ENCODE measurements at regions of chr4 and their contacts with region 1.

Region 1: GRCh38 chr4:124105212-124105611 is 607.3 kb downstream of the ANKRD50 start:
- DNase-seq: no peak
- ATAC-seq: peak in 1 of 2 donors; percentile 50
- H3K4me3 ChIP-seq: no peak overlapping the region
- H3K27ac ChIP-seq: no peak overlapping the region
- H3K4me1 ChIP-seq: no peaks in the 10 kb centered on the region
- H3K27me3 ChIP-seq: no peaks in the 10 kb centered on the region

Region 2: DNA sequence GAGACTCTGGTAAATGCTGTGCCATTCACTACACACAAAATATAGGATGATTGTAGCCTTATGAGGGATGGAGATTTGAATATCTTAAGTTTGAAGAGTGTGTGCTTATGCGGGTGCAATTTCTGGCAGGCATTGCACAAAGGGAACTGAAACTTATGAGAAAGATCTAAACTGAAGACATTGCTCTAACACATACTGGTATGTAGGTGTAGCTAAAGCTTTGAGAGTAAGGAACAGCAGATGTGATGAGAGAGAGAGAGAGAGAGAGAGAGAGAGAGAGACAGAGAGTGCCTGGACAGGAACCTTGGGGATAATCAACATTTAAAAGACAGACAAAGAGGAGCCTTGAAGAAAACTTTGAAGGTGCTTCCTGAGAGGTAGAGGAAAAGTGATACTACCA is 329.0 kb before region 1 on chr4:
- intact Hi-C with region 1: loop called in 3 of 4 experiments (anchors 5 to 10 kb)
- DNase-seq: no peak
- ATAC-seq: no peak
- H3K4me3 ChIP-seq: no peak overlapping the region
- H3K27ac ChIP-seq: no peak overlapping the region
- H3K4me1 ChIP-seq: peaks cover 2% of the 10 kb centered on the region
- H3K27me3 ChIP-seq: no peaks in the 10 kb centered on the region

Region 3: GRCh38 chr4:124044867-124045266 is 60.3 kb before region 1 on chr4:
- intact Hi-C with region 1: no loop called
- DNase-seq: peak in 1 of 3 donors; percentile 42
- ATAC-seq: peak in 1 of 2 donors; percentile 11
- H3K4me3 ChIP-seq: no peak overlapping the region
- H3K27ac ChIP-seq: no peak overlapping the region
- H3K4me1 ChIP-seq: no peaks in the 10 kb centered on the region
- H3K27me3 ChIP-seq: no peaks in the 10 kb centered on the region

Region 4: GRCh38 chr4:125266901-125267604 is 1161.8 kb after region 1 on chr4:
- intact Hi-C with region 1: no loop called
- DNase-seq: no peak
- ATAC-seq: no peak
- H3K4me3 ChIP-seq: no peak overlapping the region
- H3K27ac ChIP-seq: no peak overlapping the region
- H3K4me1 ChIP-seq: no peaks in the 10 kb centered on the region
- H3K27me3 ChIP-seq: no peaks in the 10 kb centered on the region